ENCODE measurements at regions of chr18 and their contacts with region 1.

Region 1: DNA sequence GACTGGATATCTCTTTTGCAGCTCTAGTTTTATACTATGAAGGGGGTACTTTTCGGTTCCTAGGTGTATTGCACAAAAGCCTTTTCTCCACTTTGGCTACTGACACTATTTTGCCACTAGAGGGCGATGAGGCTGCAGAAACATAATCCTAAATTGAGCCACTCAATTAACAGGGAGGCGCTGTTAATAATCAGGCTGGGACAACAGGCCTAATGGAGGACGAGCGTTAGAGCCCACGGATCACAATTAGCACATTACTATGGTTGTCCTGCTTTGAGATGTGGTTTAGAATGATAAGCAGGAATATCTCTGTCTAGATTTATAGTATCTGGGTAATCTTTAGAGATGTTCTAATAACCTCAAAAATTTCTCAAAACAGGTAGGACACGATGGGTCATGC is 62.2 kb upstream of the PMAIP1 start:
- DNase-seq: peak; percentile 60 to 70
- H3K4me3 ChIP-seq: no peak overlapping the region
- CTCF ChIP-seq: no peak
- POLR2A ChIP-seq: no peak

Region 2: GRCh38 chr18:58140387-58141325 is 1696.9 kb before region 1 on chr18:
- intact Hi-C with region 1: no loop called
- DNase-seq: peak in 1 of 2 donors; percentile 53
- H3K4me3 ChIP-seq: no peak overlapping the region
- CTCF ChIP-seq: no peak
- POLR2A ChIP-seq: no peak

Region 3: DNA sequence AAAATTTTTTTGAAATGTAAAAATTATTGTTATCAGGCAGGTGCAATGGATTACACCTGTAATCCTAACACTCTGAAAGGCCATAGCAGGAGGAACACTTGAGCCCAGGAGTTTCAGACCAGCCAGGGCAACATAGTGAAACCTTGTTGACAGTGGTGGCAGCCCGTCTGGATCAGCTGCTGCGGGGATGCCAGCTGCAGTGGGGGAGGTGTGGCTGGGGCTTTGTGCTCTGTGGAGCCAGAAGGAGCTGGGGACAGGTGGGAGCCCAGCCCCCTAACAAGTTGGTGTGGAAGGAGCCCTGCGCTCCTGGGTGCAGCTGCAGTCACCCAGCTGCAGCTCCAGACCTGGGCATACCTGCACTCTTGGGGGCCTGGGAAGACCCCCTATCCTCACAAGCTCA is 717.4 kb after region 1 on chr18:
- intact Hi-C with region 1: loop called (anchors 10 kb)
- DNase-seq: no peak
- H3K4me3 ChIP-seq: no peak overlapping the region
- CTCF ChIP-seq: no peak
- POLR2A ChIP-seq: no peak